ENCODE measurements at regions of chr13 and their contacts with region 1.

Region 1: DNA sequence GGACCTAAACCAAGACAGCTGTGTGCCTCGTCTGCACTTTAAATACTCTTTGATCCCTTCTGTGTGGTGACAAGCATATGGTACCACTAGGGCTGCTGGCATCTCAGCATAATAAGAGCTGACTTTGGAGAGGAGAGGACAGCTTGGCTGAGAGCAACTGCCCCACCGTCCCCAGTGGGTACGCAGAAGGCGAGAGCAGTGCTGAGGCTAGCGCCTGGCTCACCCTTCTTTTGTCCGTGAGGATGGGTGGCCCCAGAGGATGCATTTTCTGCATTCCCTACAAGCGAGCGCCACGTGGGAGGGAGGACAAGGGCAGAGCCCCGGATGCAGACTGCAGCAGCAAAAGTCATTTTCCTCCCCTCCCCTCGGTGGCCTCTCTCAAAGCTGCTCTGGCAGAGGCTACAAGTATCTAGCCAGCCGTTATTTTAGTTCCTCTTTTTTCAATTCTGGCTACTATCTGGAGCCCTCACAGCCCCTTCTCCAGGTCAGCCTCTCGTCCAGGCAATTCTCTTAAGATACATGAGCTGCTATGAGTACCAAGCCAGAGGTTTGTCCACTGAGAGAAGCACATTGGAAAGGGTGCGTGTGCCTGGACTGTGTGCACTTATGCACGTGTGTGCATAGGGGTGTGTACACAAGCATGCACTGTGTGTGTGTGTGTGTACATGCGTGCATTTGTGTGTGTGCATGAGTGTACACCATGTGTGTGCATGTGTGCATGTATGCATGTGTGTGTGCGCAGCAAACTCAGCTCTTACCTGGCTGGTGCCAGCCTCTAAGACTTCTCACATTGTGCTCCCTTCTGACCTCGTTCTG is 51.3 kb downstream of the RAB20 start:
- DNase-seq: peak in 4 of 5 donors; percentile 47 to 68 (median 64)
- ATAC-seq: peak in 3 of 4 donors; percentile 13 to 24 (median 20)
- H3K4me3 ChIP-seq: no peak overlapping the region
- H3K27ac ChIP-seq: peak overlapping the region; percentile 36 to 97 (median 86)
- H3K4me1 ChIP-seq: peaks cover 0 to 53% (median 28%) of the 10 kb centered on the region in 12 donors
- H3K27me3 ChIP-seq: no peaks in the 10 kb centered on the region
- CTCF ChIP-seq: no peak
- POLR2A ChIP-seq: no peak

Region 2: GRCh38 chr13:110525328-110526319 is 15.4 kb after region 1 on chr13:
- intact Hi-C with region 1: loop called in 1 of 10 experiments (anchors 1 kb)
- DNase-seq: peak in 4 of 5 donors; percentile 56 to 83 (median 72)
- ATAC-seq: peak; percentile 53 to 74 (median 68)
- H3K4me3 ChIP-seq: no peak overlapping the region
- H3K27ac ChIP-seq: peak overlapping the region; percentile 69 to 94 (median 86)
- H3K4me1 ChIP-seq: peaks cover 0 to 86% (median 63%) of the 10 kb centered on the region in 12 donors
- H3K27me3 ChIP-seq: no peaks in the 10 kb centered on the region
- CTCF ChIP-seq: no peak
- POLR2A ChIP-seq: no peak